Activated naive CD4-positive, alpha-beta T cell treated with anti-CD3 and anti-CD28 coated beads, Interleukin-2, amount 10 ng/mL, durations not matched to agents 7 days and 5 days (primary cell): ENCODE measurements at regions of chr10 and their contacts with region 1.

Region 1: GRCh38 chr10:49164559-49165188 is 23.5 kb downstream of the TMEM273 start:
- DNase-seq: peak; percentile 67
- H3K4me3 Mint-ChIP-seq: no peak overlapping the region
- H3K27ac Mint-ChIP-seq: no peak overlapping the region
- H3K4me1 Mint-ChIP-seq: peaks cover 12% of the 10 kb centered on the region
- H3K27me3 Mint-ChIP-seq: no peaks in the 10 kb centered on the region

Region 2: DNA sequence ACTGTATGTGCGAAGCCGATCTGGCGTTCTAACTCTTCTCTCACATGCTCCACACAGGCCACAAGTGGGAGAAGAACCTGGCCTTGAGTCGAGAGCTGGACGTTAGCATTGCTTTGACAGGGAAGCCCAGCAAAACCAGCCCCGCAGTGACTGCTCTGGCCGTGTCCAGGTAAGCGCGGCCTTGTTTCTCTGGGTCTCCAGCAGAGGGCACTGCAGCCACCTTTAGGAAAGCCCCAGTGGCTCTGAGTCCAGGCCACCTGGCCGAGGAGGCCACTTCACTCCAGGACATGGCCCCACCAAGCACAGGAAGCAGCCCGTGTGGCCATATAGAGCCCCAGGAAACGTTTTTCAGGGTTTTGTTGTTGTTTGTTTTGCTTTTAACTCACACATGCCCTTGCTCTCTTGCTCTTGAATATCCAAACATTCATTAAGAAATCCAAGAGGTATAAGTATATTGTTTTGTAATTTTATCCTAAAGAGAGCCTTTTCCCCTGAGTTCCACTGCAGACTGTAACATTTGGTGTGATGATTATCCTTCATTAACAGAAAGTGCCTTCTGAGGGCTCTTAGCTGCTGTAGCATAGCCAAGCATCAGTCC is 183.3 kb before region 1 on chr10:
- CTCF ChIA-PET with region 1: interaction called, 11 read pairs
- DNase-seq: peak; percentile 58
- H3K4me3 Mint-ChIP-seq: no peak overlapping the region
- H3K27ac Mint-ChIP-seq: no peak overlapping the region
- H3K4me1 Mint-ChIP-seq: no peaks in the 10 kb centered on the region
- H3K27me3 Mint-ChIP-seq: no peaks in the 10 kb centered on the region

Region 3: DNA sequence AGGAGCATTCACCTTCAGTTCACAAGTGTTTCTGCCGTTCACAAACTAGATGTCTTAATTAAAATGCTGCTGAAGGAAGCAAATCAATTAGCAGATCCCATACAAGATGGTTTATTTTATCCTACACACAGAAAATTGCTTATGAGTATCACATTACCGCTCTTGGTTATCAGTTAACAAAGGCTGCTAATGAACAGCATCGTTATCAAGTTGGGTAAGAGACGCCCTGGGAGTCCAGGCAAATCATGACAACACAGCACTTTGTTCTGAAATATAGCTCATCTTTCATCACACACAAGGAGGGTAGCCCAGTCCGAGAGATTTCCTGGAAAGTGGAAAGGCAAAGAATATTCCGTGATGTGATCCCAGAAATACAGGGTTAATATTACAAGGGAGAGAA is 10.0 kb before region 1 on chr10:
- CTCF ChIA-PET with region 1: interaction called, 12 read pairs
- DNase-seq: no peak
- H3K4me3 Mint-ChIP-seq: no peak overlapping the region
- H3K27ac Mint-ChIP-seq: no peak overlapping the region
- H3K4me1 Mint-ChIP-seq: peaks cover 18% of the 10 kb centered on the region
- H3K27me3 Mint-ChIP-seq: peaks cover 28% of the 10 kb centered on the region